Transverse colon (tissue), 4 donors: ENCODE measurements at regions of chrX and their contacts with region 1.

Region 1: DNA sequence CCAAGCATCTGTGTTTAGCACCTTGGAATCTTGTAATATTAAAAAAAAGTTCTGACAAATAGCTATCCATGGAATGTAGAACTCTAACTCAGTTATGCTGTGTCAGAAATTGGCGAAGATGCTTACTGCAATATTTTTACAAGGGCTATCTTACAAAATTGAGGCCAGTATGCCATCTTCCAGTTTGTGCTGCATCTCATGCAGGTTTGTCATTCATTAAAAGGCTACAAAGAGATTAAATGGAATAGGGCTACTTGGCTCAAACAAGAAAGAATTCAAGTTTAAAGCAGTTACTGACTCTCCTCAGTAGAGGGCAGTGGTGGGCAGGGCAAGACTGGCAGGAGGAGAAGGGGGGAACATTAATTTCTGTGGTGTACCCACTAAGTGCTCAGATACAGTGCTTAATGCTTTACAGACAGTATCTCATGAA is 66.5 kb downstream of the SHROOM4 start:
- DNase-seq: no peak
- H3K4me3 ChIP-seq: no peak overlapping the region
- H3K27ac ChIP-seq: no peak overlapping the region
- H3K4me1 ChIP-seq: no peaks in the 10 kb centered on the region
- H3K27me3 ChIP-seq: no peaks in the 10 kb centered on the region
- CTCF ChIP-seq: peak; percentile 51 to 66 (median 56)
- EP300 ChIP-seq: no peak
- POLR2A ChIP-seq: no peak

Region 2: GRCh38 chrX:50890161-50890560 is 142.7 kb after region 1 on chrX:
- in situ Hi-C with region 1: loop called in 1 of 4 experiments (anchors 10 kb)
- intact Hi-C with region 1: no loop called
- DNase-seq: no peak
- H3K4me3 ChIP-seq: no peak overlapping the region
- H3K27ac ChIP-seq: no peak overlapping the region
- H3K4me1 ChIP-seq: no peaks in the 10 kb centered on the region
- H3K27me3 ChIP-seq: no peaks in the 10 kb centered on the region
- CTCF ChIP-seq: no peak
- EP300 ChIP-seq: no peak
- POLR2A ChIP-seq: no peak

Region 3: GRCh38 chrX:50905334-50905733 is 157.8 kb after region 1 on chrX:
- in situ Hi-C with region 1: loop called in 2 of 4 experiments (anchors 10 to 25 kb)
- intact Hi-C with region 1: no loop called
- DNase-seq: peak; percentile 19
- H3K4me3 ChIP-seq: no peak overlapping the region
- H3K27ac ChIP-seq: no peak overlapping the region
- H3K4me1 ChIP-seq: no peaks in the 10 kb centered on the region
- H3K27me3 ChIP-seq: no peaks in the 10 kb centered on the region
- CTCF ChIP-seq: peak in 3 of 5 experiments; percentile 27 to 33 (median 27)
- EP300 ChIP-seq: no peak
- POLR2A ChIP-seq: no peak

Region 4: DNA sequence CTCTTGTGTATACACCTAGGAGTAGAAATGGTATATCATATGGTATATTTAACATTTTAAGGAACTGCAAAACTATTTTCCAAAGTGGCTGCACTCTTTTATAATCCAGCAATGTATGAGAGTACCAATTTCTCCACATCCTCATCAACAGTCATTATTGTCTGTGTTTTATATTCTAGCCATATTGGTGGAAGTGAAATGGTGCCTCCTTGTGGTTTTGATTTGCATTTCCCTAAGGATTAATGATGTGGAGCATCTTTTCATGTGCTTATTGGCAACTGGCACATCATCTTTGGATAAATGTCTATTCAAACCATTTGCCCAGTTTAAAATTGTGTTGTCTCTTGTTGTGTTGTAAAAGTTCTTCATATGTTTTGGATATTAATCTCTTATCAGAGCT is 172.6 kb after region 1 on chrX:
- in situ Hi-C with region 1: loop called in 2 of 4 experiments (anchors 10 to 25 kb)
- intact Hi-C with region 1: no loop called
- DNase-seq: no peak
- H3K4me3 ChIP-seq: no peak overlapping the region
- H3K27ac ChIP-seq: no peak overlapping the region
- H3K4me1 ChIP-seq: no peaks in the 10 kb centered on the region
- H3K27me3 ChIP-seq: no peaks in the 10 kb centered on the region
- CTCF ChIP-seq: peak; percentile 23 to 42 (median 31)
- EP300 ChIP-seq: no peak
- POLR2A ChIP-seq: no peak